Naive thymus-derived CD4-positive, alpha-beta T cell (primary cell): ENCODE measurements at regions of chr17 and their contacts with region 1.

Region 1: DNA sequence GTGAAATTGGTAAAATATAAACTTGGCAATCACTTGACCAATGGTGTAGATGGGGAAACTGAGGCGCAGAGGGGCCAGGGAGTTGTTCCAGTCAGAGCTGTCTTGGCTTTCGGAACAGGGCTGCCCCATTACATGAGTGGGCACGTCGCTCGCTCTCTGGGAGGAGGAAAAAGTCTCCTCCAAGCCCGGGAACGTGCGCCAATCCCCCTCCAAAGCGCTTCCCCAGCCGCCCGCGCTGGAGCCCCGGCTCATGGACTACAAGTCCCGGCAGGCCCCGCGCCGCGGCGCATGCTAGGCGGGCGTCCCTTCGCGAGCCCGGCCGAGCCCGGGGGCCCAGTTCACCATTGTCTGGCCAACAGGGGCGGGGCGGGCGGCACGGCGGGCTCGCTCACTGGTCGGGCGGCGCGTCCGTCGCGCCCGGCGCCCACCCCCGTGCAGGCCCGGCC is 291 bp upstream of the LLGL1 start:
- DNase-seq: peak; percentile 92 to 98 (median 94)
- ATAC-seq: peak; percentile 99
- H3K4me3 ChIP-seq: peak overlapping the region; percentile 46
- H3K4me3 Mint-ChIP-seq: peak overlapping the region; percentile 54 to 94 (median 68)
- H3K27ac ChIP-seq: peak overlapping the region; percentile 34
- H3K27ac Mint-ChIP-seq: peak overlapping the region in 4 of 9 donors; percentile 64 to 80 (median 77)
- H3K4me1 ChIP-seq: peaks cover 7 to 13% of the 10 kb centered on the region in 2 donors
- H3K4me1 Mint-ChIP-seq: peaks cover 24 to 30% (median 27%) of the 10 kb centered on the region in 7 donors
- H3K27me3 ChIP-seq: no peaks in the 10 kb centered on the region
- H3K27me3 Mint-ChIP-seq: no peaks in the 10 kb centered on the region

Region 2: GRCh38 chr17:17749921-17750320 is 475.2 kb before region 1 on chr17:
- CTCF ChIA-PET with region 1: no interaction called
- POLR2A ChIA-PET with region 1: no interaction called
- intact Hi-C with region 1: no loop called
- DNase-seq: peak in 6 of 9 donors; percentile 37 to 54 (median 44)
- ATAC-seq: no peak
- H3K4me3 ChIP-seq: no peak overlapping the region
- H3K4me3 Mint-ChIP-seq: peak overlapping the region; percentile 37 to 87 (median 58)
- H3K27ac ChIP-seq: peak overlapping the region; percentile 89
- H3K27ac Mint-ChIP-seq: peak overlapping the region; percentile 79 to 99 (median 97)
- H3K4me1 ChIP-seq: peaks cover 38 to 48% of the 10 kb centered on the region in 2 donors
- H3K4me1 Mint-ChIP-seq: peaks cover 40 to 70% (median 56%) of the 10 kb centered on the region in 7 donors
- H3K27me3 ChIP-seq: no peaks in the 10 kb centered on the region
- H3K27me3 Mint-ChIP-seq: no peaks in the 10 kb centered on the region

Region 3: GRCh38 chr17:18141210-18141803 is 83.8 kb before region 1 on chr17:
- CTCF ChIA-PET with region 1: no interaction called
- POLR2A ChIA-PET with region 1: no interaction called
- intact Hi-C with region 1: loop called in 1 of 2 experiments (anchors 1 kb)
- DNase-seq: peak in 7 of 9 donors; percentile 30 to 66 (median 61)
- ATAC-seq: peak; percentile 81
- H3K4me3 ChIP-seq: no peak overlapping the region
- H3K4me3 Mint-ChIP-seq: no peak overlapping the region
- H3K27ac ChIP-seq: no peak overlapping the region
- H3K27ac Mint-ChIP-seq: peak overlapping the region in 2 of 9 donors; percentile 7 to 19
- H3K4me1 ChIP-seq: peaks cover 0 to 4% of the 10 kb centered on the region in 2 donors
- H3K4me1 Mint-ChIP-seq: peaks cover 0 to 5% (median 4%) of the 10 kb centered on the region in 7 donors
- H3K27me3 ChIP-seq: no peaks in the 10 kb centered on the region
- H3K27me3 Mint-ChIP-seq: no peaks in the 10 kb centered on the region